GM13976 (cell line): ENCODE measurements at regions of chr10 and their contacts with region 1.

Region 1: GRCh38 chr10:62048919-62049623 is 147.6 kb downstream of the ARID5B start:
- DNase-seq: no peak
- CTCF ChIP-seq: no peak

Region 2: GRCh38 chr10:61903221-61903927 is 145.7 kb before region 1 on chr10:
- in situ Hi-C with region 1: loop called (anchors 10 kb)
- DNase-seq: peak; percentile 72
- CTCF ChIP-seq: no peak

Region 3: DNA sequence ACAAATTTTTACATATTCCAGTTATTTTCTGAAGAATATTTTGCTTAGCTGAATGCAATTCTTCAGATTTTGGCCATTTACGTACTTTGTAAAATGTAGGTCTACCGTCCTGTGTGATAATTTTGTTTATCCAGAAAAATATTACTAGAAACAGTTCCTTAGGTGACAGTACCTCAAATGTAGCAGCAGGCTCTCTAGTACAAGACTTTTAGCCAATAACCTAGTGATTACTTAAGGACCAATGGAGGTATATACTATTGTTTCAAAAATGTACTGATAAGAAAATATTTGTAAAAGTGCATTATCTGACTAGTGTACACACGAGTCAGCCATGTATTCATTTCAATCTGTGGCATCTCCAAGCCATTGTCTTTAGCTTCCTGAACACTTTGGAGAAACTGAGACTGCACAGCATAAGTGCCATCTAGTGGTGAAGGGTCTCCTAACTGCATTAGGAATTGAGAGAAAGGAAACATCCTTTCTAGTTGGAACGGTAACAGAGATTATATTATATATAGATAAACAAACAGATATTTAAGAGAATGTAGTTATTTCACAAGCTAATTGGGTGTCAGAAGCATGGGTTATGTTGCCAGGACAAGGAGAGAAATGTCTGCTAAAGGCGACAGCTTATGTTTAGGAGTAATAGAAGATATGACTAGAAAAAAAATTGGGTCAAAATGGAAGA is 195.9 kb after region 1 on chr10:
- in situ Hi-C with region 1: loop called (anchors 10 kb)
- DNase-seq: peak; percentile 41
- CTCF ChIP-seq: peak; percentile 63

Region 4: DNA sequence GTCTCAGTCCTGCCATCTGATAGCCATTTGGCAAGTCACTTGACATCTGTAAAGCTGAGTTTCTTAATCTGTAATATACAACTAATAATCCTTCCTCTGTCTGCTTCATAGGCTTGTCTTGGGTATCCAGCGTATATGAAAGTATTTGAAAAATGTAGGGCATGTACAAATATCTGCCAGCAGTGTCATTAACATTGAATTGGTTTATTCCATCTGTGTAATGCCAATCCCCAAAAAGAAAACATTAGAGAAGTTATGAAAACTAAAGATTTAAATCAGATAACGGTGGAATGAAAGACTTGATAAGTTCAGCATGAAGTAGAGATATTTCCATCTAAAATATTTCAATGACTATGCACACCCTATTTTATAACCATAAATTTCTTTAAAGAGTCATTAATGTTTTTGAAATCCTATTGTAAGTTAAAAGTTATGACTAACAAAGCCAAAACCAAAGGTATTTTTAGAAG is 229.4 kb after region 1 on chr10:
- in situ Hi-C with region 1: no loop called
- DNase-seq: no peak
- CTCF ChIP-seq: no peak

Region 5: GRCh38 chr10:62788861-62789467 is 739.9 kb after region 1 on chr10:
- in situ Hi-C with region 1: no loop called
- DNase-seq: no peak
- CTCF ChIP-seq: no peak